ENCODE measurements at regions of chr11 and their contacts with region 1.

Region 1: GRCh38 chr11:11798586-11799438 is 43.0 kb upstream of the USP47 start:
- DNase-seq: peak in 1 of 2 experiments; percentile 89
- H3K4me3 ChIP-seq: no peak overlapping the region
- H3K27ac ChIP-seq: no peak overlapping the region
- H3K4me1 ChIP-seq: no peaks in the 10 kb centered on the region
- H3K27me3 ChIP-seq: no peaks in the 10 kb centered on the region; a peak in 1 of 7 replicates
- CTCF ChIP-seq: peak; percentile 60 to 91 (median 89)
- EP300 ChIP-seq: no peak
- POLR2A ChIP-seq: no peak
- RAD21 ChIP-seq: peak; percentile 81 to 88

Region 2: GRCh38 chr11:11757909-11758308 is 40.9 kb before region 1 on chr11:
- CTCF ChIA-PET with region 1: no interaction called
- POLR2A ChIA-PET with region 1: no interaction called
- DNase-seq: no peak
- H3K4me3 ChIP-seq: no peak overlapping the region
- H3K27ac ChIP-seq: no peak overlapping the region
- H3K4me1 ChIP-seq: peaks cover 0 to 7% (median 2%) of the 10 kb centered on the region in 4 experiments; a peak in 3 of 7 replicates
- H3K27me3 ChIP-seq: no peaks in the 10 kb centered on the region
- CTCF ChIP-seq: no peak
- EP300 ChIP-seq: no peak
- POLR2A ChIP-seq: no peak
- RAD21 ChIP-seq: no peak

Region 3: DNA sequence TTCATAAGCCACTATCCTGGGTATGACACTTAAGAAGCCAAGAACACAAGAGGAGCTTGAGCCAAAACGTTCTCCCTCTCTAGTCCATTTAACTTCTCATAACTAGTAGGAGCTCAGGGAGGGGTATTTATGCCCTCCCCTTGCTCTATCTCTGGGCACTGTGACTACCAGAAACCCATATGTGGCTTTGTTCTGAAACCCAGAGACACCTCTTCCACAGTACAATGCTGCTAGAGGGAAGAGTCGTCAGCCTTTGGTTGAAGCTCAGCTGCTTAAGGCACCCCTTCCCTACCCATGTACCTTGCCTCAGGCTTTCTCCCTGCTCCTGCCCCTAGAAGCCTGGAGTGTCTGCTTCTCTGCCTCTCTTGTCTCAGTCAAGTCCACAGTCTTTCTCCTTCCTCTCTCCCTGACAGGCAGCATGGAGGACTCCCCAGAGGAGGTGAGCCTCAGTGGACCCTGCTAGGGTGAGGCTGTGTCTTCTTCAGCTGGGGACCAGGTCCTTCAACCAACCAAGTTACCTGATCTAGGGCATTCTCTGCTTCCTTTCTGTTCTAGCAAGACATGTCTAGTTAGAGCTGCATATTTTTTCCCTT is 19.8 kb after region 1 on chr11:
- CTCF ChIA-PET with region 1: interaction called, 10 read pairs
- POLR2A ChIA-PET with region 1: no interaction called
- DNase-seq: no peak
- H3K4me3 ChIP-seq: no peak overlapping the region
- H3K27ac ChIP-seq: no peak overlapping the region
- H3K4me1 ChIP-seq: no peaks in the 10 kb centered on the region
- H3K27me3 ChIP-seq: no peaks in the 10 kb centered on the region
- CTCF ChIP-seq: no peak
- EP300 ChIP-seq: no peak
- POLR2A ChIP-seq: no peak
- RAD21 ChIP-seq: no peak

Region 4: DNA sequence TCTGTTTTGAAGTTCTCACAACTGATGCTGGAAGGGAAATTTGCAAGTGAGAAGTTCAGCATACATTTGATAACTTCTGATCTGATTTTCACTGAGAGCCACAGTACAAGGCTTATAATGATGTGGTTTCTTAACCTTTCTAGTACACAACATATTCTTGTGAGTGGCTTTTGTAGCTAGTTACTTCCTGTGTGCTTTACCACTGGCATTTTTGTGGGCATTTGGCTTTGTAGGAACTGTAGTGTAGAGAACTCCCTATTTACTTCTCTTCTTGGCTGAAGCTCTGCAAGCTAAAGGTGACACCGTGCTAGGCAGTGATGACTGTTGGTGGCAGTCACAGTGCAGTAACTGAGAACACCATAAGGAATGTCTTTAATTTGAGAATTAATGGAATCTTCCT is 57.8 kb after region 1 on chr11:
- CTCF ChIA-PET with region 1: no interaction called
- POLR2A ChIA-PET with region 1: no interaction called
- DNase-seq: no peak
- H3K4me3 ChIP-seq: no peak overlapping the region; a peak in 1 of 8 replicates
- H3K27ac ChIP-seq: no peak overlapping the region
- H3K4me1 ChIP-seq: peaks cover 0 to 7% (median 3%) of the 10 kb centered on the region in 4 experiments; a peak in 5 of 7 replicates
- H3K27me3 ChIP-seq: no peaks in the 10 kb centered on the region
- CTCF ChIP-seq: no peak
- EP300 ChIP-seq: no peak
- POLR2A ChIP-seq: no peak
- RAD21 ChIP-seq: no peak

Region 5: GRCh38 chr11:11876458-11876857 is 77.6 kb after region 1 on chr11:
- CTCF ChIA-PET with region 1: interaction called, 24 read pairs
- POLR2A ChIA-PET with region 1: no interaction called
- DNase-seq: no peak
- H3K4me3 ChIP-seq: no peak overlapping the region
- H3K27ac ChIP-seq: no peak overlapping the region
- H3K4me1 ChIP-seq: peaks cover 2 to 7% (median 5%) of the 10 kb centered on the region in 4 experiments; a peak in 6 of 7 replicates
- H3K27me3 ChIP-seq: no peaks in the 10 kb centered on the region
- CTCF ChIP-seq: peak; percentile 7 to 66 (median 50)
- EP300 ChIP-seq: no peak
- POLR2A ChIP-seq: no peak
- RAD21 ChIP-seq: peak; percentile 51 to 55; a peak in 3 of 4 replicates

Region 6: GRCh38 chr11:11899401-11899800 is 100.6 kb after region 1 on chr11:
- CTCF ChIA-PET with region 1: interaction called, 13 read pairs
- POLR2A ChIA-PET with region 1: no interaction called
- DNase-seq: no peak
- H3K4me3 ChIP-seq: no peak overlapping the region
- H3K27ac ChIP-seq: no peak overlapping the region
- H3K4me1 ChIP-seq: no peaks in the 10 kb centered on the region
- H3K27me3 ChIP-seq: no peaks in the 10 kb centered on the region
- CTCF ChIP-seq: peak in 2 of 3 experiments; percentile 17 to 37; a peak in 1 of 4 replicates
- EP300 ChIP-seq: no peak
- POLR2A ChIP-seq: no peak
- RAD21 ChIP-seq: peak; percentile 36 to 41; a peak in 3 of 4 replicates

Measured in H1 (cell line).